Tibial artery (tissue), 4 donors: ENCODE measurements at regions of chr14 and their contacts with region 1.

Region 1: GRCh38 chr14:90697577-90698206 is 118.5 kb downstream of the TTC7B start:
- DNase-seq: peak; percentile 86 to 92
- H3K4me3 ChIP-seq: no peak overlapping the region
- H3K27ac ChIP-seq: peak overlapping the region; percentile 79
- H3K4me1 ChIP-seq: peaks cover 0 to 33% (median 25%) of the 10 kb centered on the region in 4 donors
- H3K27me3 ChIP-seq: no peaks in the 10 kb centered on the region
- CTCF ChIP-seq: peak; percentile 95 to 96

Region 2: DNA sequence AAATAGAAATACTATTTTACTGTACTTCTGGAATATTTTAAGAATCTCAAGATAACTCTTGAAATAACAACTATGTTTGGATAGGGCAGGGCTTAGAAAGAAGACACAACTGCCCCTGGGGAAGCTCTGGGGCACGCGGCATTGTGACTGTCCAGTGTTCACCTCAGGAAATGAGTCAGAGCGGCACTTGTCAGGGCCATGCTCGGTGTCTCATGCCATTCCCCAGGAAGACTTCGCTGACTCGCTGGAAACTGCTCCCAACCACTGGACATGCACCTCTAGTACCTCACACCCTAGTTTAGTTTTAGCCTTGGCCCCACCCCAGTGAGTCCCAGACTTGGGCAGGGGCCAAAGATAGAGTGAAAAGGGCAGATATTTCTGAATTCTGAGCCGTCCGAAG is 73.5 kb before region 1 on chr14:
- intact Hi-C with region 1: loop called (anchors 2 kb)
- DNase-seq: peak; percentile 42 to 73
- H3K4me3 ChIP-seq: no peak overlapping the region
- H3K27ac ChIP-seq: peak overlapping the region; percentile 8 to 33
- H3K4me1 ChIP-seq: peaks cover 5 to 51% (median 38%) of the 10 kb centered on the region in 4 donors
- H3K27me3 ChIP-seq: no peaks in the 10 kb centered on the region
- CTCF ChIP-seq: no peak